ENCODE measurements at regions of chr2 and their contacts with region 1.

Region 1: GRCh38 chr2:71299507-71299906 is 32.1 kb upstream of the ZNF638 start:
- DNase-seq: no peak
- H3K4me3 ChIP-seq: no peak overlapping the region
- H3K27ac ChIP-seq: no peak overlapping the region
- H3K4me1 ChIP-seq: no peaks in the 10 kb centered on the region
- H3K27me3 ChIP-seq: no peaks in the 10 kb centered on the region
- CTCF ChIP-seq: peak in 2 of 3 experiments; percentile 27 to 61; a peak in 2 of 4 replicates
- EP300 ChIP-seq: no peak
- POLR2A ChIP-seq: no peak
- RAD21 ChIP-seq: peak; percentile 61 to 66

Region 2: GRCh38 chr2:71235930-71236587 is 63.4 kb before region 1 on chr2:
- CTCF ChIA-PET with region 1: interaction called, 12 read pairs
- POLR2A ChIA-PET with region 1: no interaction called
- DNase-seq: peak in 1 of 2 experiments; percentile 55
- H3K4me3 ChIP-seq: no peak overlapping the region
- H3K27ac ChIP-seq: no peak overlapping the region; the same call in 1 of the 2 replicates
- H3K4me1 ChIP-seq: peaks cover 0 to 6% (median 0%) of the 10 kb centered on the region in 4 experiments; a peak in 3 of 7 replicates
- H3K27me3 ChIP-seq: no peaks in the 10 kb centered on the region; a peak in 1 of 7 replicates
- CTCF ChIP-seq: no peak
- EP300 ChIP-seq: no peak
- POLR2A ChIP-seq: no peak
- RAD21 ChIP-seq: no peak

Region 3: DNA sequence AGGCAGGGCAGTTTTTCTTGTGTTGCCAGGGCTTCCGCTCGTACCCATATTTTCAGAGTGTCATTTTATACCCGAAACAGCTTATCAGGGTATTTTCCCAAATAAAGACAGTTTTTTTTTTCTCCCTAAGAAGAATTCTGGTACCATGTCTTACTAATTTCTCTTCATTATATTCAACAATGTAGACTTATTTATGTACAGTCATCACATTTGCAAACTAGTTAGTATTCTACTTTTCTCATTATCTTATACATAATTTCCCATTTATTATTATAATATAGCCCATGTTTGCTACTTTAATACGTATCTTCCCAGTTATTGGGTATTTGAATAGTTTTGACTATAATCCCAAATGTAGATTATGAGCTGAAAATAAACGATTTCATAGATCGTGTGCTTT is 36.1 kb before region 1 on chr2:
- CTCF ChIA-PET with region 1: no interaction called
- POLR2A ChIA-PET with region 1: no interaction called
- DNase-seq: no peak
- H3K4me3 ChIP-seq: no peak overlapping the region
- H3K27ac ChIP-seq: no peak overlapping the region
- H3K4me1 ChIP-seq: no peaks in the 10 kb centered on the region
- H3K27me3 ChIP-seq: no peaks in the 10 kb centered on the region
- CTCF ChIP-seq: no peak
- EP300 ChIP-seq: no peak
- POLR2A ChIP-seq: no peak
- RAD21 ChIP-seq: no peak

Region 4: GRCh38 chr2:71313016-71313766 is 13.7 kb after region 1 on chr2:
- CTCF ChIA-PET with region 1: interaction called, 23 read pairs
- POLR2A ChIA-PET with region 1: interaction called, 3 read pairs
- DNase-seq: no peak
- H3K4me3 ChIP-seq: no peak overlapping the region
- H3K27ac ChIP-seq: no peak overlapping the region
- H3K4me1 ChIP-seq: no peaks in the 10 kb centered on the region
- H3K27me3 ChIP-seq: no peaks in the 10 kb centered on the region
- CTCF ChIP-seq: no peak
- EP300 ChIP-seq: no peak
- POLR2A ChIP-seq: no peak
- RAD21 ChIP-seq: no peak

Region 5: DNA sequence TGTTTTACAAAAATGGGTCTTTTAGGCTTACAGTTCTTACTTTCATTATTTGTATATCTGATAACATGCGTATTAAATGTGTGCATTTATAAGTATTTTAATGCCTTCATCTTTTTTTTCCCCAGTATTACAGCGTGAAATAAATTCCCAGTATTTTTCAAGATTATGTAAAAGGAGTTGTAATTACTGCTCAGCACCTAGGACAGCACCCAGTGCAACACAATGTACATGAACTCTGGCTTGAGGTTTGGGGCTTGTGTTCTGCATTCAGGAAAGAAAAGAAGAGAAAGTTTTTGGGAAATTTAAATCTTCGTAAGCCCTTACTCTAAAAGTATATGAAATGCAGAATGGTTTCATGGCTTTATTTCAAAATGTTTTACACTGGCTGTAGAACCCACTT is 48.8 kb after region 1 on chr2:
- CTCF ChIA-PET with region 1: interaction called, 10 read pairs
- POLR2A ChIA-PET with region 1: interaction called, 3 read pairs
- DNase-seq: no peak
- H3K4me3 ChIP-seq: no peak overlapping the region
- H3K27ac ChIP-seq: no peak overlapping the region
- H3K4me1 ChIP-seq: no peaks in the 10 kb centered on the region
- H3K27me3 ChIP-seq: no peaks in the 10 kb centered on the region
- CTCF ChIP-seq: no peak
- EP300 ChIP-seq: no peak
- POLR2A ChIP-seq: no peak
- RAD21 ChIP-seq: no peak

Region 6: GRCh38 chr2:71510196-71510807 is 210.8 kb after region 1 on chr2:
- CTCF ChIA-PET with region 1: interaction called, 26 read pairs
- POLR2A ChIA-PET with region 1: no interaction called
- DNase-seq: peak in 1 of 2 experiments; percentile 92
- H3K4me3 ChIP-seq: no peak overlapping the region
- H3K27ac ChIP-seq: no peak overlapping the region
- H3K4me1 ChIP-seq: no peaks in the 10 kb centered on the region; a peak in 1 of 7 replicates
- H3K27me3 ChIP-seq: no peaks in the 10 kb centered on the region
- CTCF ChIP-seq: peak; percentile 90 to 97 (median 95)
- EP300 ChIP-seq: no peak
- POLR2A ChIP-seq: no peak
- RAD21 ChIP-seq: peak; percentile 97 to 98